PC-9 (cell line): ENCODE measurements at regions of chr14 and their contacts with region 1.

Region 1: GRCh38 chr14:101774006-101774795 is 12.7 kb downstream of the PPP2R5C start:
- DNase-seq: no peak
- H3K4me3 ChIP-seq: no peak overlapping the region
- H3K27ac ChIP-seq: no peak overlapping the region
- H3K4me1 ChIP-seq: peaks cover 37% of the 10 kb centered on the region
- H3K27me3 ChIP-seq: no peaks in the 10 kb centered on the region
- CTCF ChIP-seq: no peak

Region 2: GRCh38 chr14:101241807-101242278 is 532.4 kb before region 1 on chr14:
- CTCF ChIA-PET with region 1: no interaction called
- POLR2A ChIA-PET with region 1: no interaction called
- intact Hi-C with region 1: no loop called
- DNase-seq: peak in 1 of 2 experiments; percentile 72
- H3K4me3 ChIP-seq: no peak overlapping the region; the same call in 1 of the 2 replicates
- H3K27ac ChIP-seq: peak overlapping the region; percentile 77
- H3K4me1 ChIP-seq: peaks cover 26% of the 10 kb centered on the region
- H3K27me3 ChIP-seq: no peaks in the 10 kb centered on the region
- CTCF ChIP-seq: no peak

Region 3: GRCh38 chr14:101731187-101732080 is 42.8 kb before region 1 on chr14:
- CTCF ChIA-PET with region 1: interaction called, 5 read pairs
- POLR2A ChIA-PET with region 1: no interaction called
- intact Hi-C with region 1: loop called (anchors 1 kb)
- DNase-seq: peak; percentile 98 to 100
- H3K4me3 ChIP-seq: peak overlapping the region; percentile 54
- H3K27ac ChIP-seq: peak overlapping the region; percentile 92
- H3K4me1 ChIP-seq: peaks cover 50% of the 10 kb centered on the region
- H3K27me3 ChIP-seq: no peaks in the 10 kb centered on the region
- CTCF ChIP-seq: no peak

Region 4: GRCh38 chr14:101791919-101792572 is 17.8 kb after region 1 on chr14:
- CTCF ChIA-PET with region 1: interaction called, 4 read pairs
- POLR2A ChIA-PET with region 1: interaction called, 5 read pairs
- intact Hi-C with region 1: loop called (anchors 2 kb)
- DNase-seq: peak in 1 of 2 experiments; percentile 84
- H3K4me3 ChIP-seq: peak overlapping the region; percentile 22; the same call in 1 of the 2 replicates
- H3K27ac ChIP-seq: peak overlapping the region; percentile 24
- H3K4me1 ChIP-seq: peaks cover 11% of the 10 kb centered on the region
- H3K27me3 ChIP-seq: no peaks in the 10 kb centered on the region
- CTCF ChIP-seq: no peak

Region 5: DNA sequence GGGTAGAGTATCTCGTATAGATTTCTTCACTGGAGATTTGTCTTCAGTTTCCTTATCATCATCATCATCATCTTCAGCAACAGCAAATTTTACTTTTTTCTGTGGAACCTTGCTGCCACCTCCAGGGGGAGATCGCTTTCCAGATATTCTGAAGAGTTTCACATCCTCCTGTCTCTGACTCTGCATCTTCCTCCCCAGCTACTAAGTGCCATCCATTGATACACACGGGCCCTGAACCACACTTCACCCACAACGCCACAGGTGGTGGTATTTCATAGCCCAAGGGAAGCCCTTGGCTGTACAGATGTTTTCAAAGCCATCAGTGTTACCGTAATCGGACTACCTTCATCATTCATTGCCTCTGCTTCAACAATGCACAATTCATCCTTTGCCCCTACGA is 69.5 kb after region 1 on chr14:
- CTCF ChIA-PET with region 1: interaction called, 3 read pairs
- POLR2A ChIA-PET with region 1: interaction called, 4 read pairs
- intact Hi-C with region 1: loop called (anchors 1 kb)
- DNase-seq: peak in 1 of 2 experiments; percentile 17
- H3K4me3 ChIP-seq: no peak overlapping the region
- H3K27ac ChIP-seq: no peak overlapping the region
- H3K4me1 ChIP-seq: no peaks in the 10 kb centered on the region
- H3K27me3 ChIP-seq: no peaks in the 10 kb centered on the region
- CTCF ChIP-seq: peak; percentile 66

Region 6: DNA sequence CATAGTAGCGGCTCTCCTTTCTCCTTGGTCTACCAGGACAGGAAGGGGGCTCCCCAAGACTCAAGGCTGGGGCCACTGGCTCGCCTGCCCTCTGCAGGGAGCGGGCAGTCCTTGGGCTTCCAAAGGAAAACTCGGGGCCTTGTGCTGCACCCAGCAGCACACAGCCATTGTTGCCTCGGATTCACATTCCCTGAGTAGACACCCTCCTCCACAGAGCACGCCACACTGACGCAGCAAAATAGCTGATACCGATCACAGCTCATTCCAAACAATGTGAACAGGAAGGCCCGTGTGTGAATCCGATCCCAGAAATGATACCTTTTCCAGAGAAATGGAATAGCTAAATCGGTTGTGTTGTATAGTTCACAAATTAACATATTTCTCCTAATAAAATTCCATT is 125.1 kb after region 1 on chr14:
- CTCF ChIA-PET with region 1: interaction called, 3 read pairs
- POLR2A ChIA-PET with region 1: interaction called, 4 read pairs
- intact Hi-C with region 1: loop called (anchors 5 kb)
- DNase-seq: no peak
- H3K4me3 ChIP-seq: no peak overlapping the region
- H3K27ac ChIP-seq: no peak overlapping the region
- H3K4me1 ChIP-seq: no peaks in the 10 kb centered on the region
- H3K27me3 ChIP-seq: no peaks in the 10 kb centered on the region
- CTCF ChIP-seq: no peak

Region 7: GRCh38 chr14:101927859-101928258 is 153.7 kb after region 1 on chr14:
- CTCF ChIA-PET with region 1: no interaction called
- POLR2A ChIA-PET with region 1: no interaction called
- intact Hi-C with region 1: no loop called
- DNase-seq: no peak
- H3K4me3 ChIP-seq: no peak overlapping the region
- H3K27ac ChIP-seq: no peak overlapping the region
- H3K4me1 ChIP-seq: no peaks in the 10 kb centered on the region
- H3K27me3 ChIP-seq: no peaks in the 10 kb centered on the region
- CTCF ChIP-seq: no peak

Region 8: GRCh38 chr14:101947906-101948665 is 173.9 kb after region 1 on chr14:
- CTCF ChIA-PET with region 1: interaction called, 7 read pairs
- POLR2A ChIA-PET with region 1: no interaction called
- intact Hi-C with region 1: loop called (anchors 1 kb)
- DNase-seq: peak; percentile 100
- H3K4me3 ChIP-seq: peak overlapping the region; percentile 83
- H3K27ac ChIP-seq: peak overlapping the region; percentile 93
- H3K4me1 ChIP-seq: peaks cover 20% of the 10 kb centered on the region
- H3K27me3 ChIP-seq: no peaks in the 10 kb centered on the region
- CTCF ChIP-seq: no peak